ENCODE measurements at regions of chr18 and their contacts with region 1.

Region 1: GRCh38 chr18:35343936-35344735 is at the start of gene ZNF24:
- DNase-seq: peak; percentile 93 to 94
- ATAC-seq: peak; percentile 85 to 95 (median 87)
- H3K4me3 ChIP-seq: peak within 1 kb of the TSS; percentile 99
- H3K4me3 Mint-ChIP-seq: peak within 1 kb of the TSS; percentile 99
- H3K27ac ChIP-seq: peak within 1 kb of the TSS; percentile 99
- H3K27ac Mint-ChIP-seq: peak within 1 kb of the TSS; percentile 98 to 100
- H3K4me1 ChIP-seq: peaks cover 15% of the 10 kb centered on the region
- H3K4me1 Mint-ChIP-seq: peaks cover 46 to 47% of the 10 kb centered on the region in 2 donors
- H3K27me3 ChIP-seq: no peaks in the 10 kb centered on the region
- H3K27me3 Mint-ChIP-seq: peaks cover 0 to 3% of the 10 kb centered on the region in 2 donors
- CTCF ChIP-seq: no peak
- total RNA-seq, gene ZNF24: 50.4 to 63.9 (median 58.2) TPM

Region 2: GRCh38 chr18:35085450-35086380 is 258.4 kb before region 1 on chr18:
- intact Hi-C with region 1: no loop called
- DNase-seq: no peak
- ATAC-seq: peak in 1 of 3 donors; percentile 18
- H3K4me3 ChIP-seq: no peak overlapping the region
- H3K4me3 Mint-ChIP-seq: no peak overlapping the region
- H3K27ac ChIP-seq: no peak overlapping the region
- H3K27ac Mint-ChIP-seq: peak overlapping the region; percentile 44 to 79
- H3K4me1 ChIP-seq: no peaks in the 10 kb centered on the region
- H3K4me1 Mint-ChIP-seq: peaks cover 70 to 75% of the 10 kb centered on the region in 2 donors
- H3K27me3 ChIP-seq: no peaks in the 10 kb centered on the region
- H3K27me3 Mint-ChIP-seq: no peaks in the 10 kb centered on the region
- CTCF ChIP-seq: no peak

Region 3: DNA sequence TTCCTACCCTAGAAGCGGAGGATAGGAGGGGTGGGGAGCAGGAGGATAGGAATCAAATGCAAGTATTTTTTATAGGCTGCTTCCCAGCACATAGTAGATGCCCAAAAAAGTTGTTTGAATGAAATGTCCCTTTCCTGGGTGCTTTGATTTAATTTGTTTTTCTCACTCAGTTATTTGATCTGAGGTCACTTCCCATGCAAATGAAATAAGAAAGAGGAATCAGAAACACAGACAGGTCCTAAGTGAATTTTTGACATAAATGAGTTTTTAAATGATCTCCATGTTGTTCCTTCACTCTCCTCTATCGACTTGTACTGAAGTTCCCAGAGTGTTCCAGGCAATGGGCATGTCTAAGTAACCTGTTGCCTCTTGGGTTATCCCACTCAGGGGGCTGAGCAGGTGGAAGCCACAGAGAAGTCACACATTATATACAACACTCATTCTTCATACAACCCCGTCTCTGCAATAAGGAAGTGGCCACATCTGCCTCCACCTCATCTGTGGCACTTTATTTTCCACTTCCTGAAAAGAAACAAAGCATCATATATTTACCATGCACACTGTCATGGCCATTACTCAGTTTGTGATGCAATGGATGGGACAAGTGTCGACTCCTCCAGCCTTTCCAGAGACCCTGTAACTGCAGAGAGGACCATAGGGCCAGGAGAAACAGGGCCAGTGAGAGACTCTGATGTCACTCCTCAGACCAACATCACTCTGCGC is 185.2 kb before region 1 on chr18:
- intact Hi-C with region 1: loop called (anchors 10 kb)
- DNase-seq: peak; percentile 30 to 36
- ATAC-seq: peak; percentile 84 to 88 (median 85)
- H3K4me3 ChIP-seq: no peak overlapping the region
- H3K4me3 Mint-ChIP-seq: peak overlapping the region; percentile 62
- H3K27ac ChIP-seq: peak overlapping the region; percentile 86
- H3K27ac Mint-ChIP-seq: peak overlapping the region; percentile 92
- H3K4me1 ChIP-seq: peaks cover 50% of the 10 kb centered on the region
- H3K4me1 Mint-ChIP-seq: peaks cover 71 to 72% of the 10 kb centered on the region in 2 donors
- H3K27me3 ChIP-seq: no peaks in the 10 kb centered on the region
- H3K27me3 Mint-ChIP-seq: no peaks in the 10 kb centered on the region
- CTCF ChIP-seq: no peak

Region 4: GRCh38 chr18:35267161-35267651 is 76.9 kb before region 1 on chr18:
- intact Hi-C with region 1: loop called (anchors 1 kb)
- DNase-seq: peak; percentile 61 to 82
- ATAC-seq: peak; percentile 77 to 85 (median 84)
- H3K4me3 ChIP-seq: peak overlapping the region; percentile 88
- H3K4me3 Mint-ChIP-seq: peak overlapping the region; percentile 97
- H3K27ac ChIP-seq: peak overlapping the region; percentile 94
- H3K27ac Mint-ChIP-seq: peak overlapping the region; percentile 91 to 98
- H3K4me1 ChIP-seq: peaks cover 18% of the 10 kb centered on the region
- H3K4me1 Mint-ChIP-seq: peaks cover 23 to 33% of the 10 kb centered on the region in 2 donors
- H3K27me3 ChIP-seq: no peaks in the 10 kb centered on the region
- H3K27me3 Mint-ChIP-seq: no peaks in the 10 kb centered on the region
- CTCF ChIP-seq: no peak

Region 5: DNA sequence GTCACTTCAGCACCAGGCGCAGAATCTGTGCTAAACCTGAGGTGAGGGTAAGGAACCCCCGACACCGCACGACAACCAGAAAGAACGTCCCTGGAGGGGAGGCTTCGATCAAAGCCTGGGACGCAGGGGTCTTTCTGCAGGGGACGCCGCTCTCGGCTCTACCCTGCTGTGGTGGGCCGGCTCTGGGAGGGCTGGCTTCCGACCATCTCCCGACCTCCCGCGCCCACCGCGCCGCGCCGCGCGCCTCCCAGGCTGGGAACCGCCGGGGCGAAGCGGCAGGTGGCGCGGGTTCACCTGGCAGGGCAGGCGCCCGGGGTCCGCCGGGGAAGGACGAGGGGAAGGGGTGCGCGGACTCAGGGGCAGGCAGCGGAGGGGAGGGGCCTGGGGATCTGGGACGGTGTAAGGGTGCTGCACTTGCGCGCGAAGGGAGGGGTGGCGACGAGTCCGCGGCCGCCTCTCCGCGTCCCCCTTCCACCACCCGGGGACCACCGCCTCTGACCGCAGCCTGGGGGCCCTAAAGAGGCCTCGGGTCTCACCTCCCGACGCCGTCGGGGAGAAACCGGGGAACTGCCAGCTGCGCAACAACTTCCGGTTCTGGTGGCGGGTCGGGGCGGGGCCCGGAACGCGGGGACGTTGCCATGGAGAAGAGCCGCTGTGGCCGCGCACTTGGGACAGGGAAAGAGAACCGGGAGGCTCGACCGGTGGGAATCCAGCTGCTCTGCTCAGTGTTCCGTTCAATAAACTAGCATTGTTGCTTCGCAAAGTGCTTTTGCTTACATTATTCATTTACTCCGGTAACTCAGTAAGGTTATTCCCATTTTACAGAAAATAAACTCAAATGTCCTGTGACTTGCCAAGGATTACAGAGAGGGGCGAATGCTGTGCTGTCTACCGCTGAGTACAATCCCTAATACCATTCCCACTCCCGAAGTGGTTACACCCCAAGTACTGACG is 32.9 kb after region 1 on chr18 and contains the start of gene ZNF396:
- intact Hi-C with region 1: loop called (anchors 2 kb)
- DNase-seq: peak; percentile 68 to 82
- ATAC-seq: peak; percentile 80 to 84 (median 81)
- H3K4me3 ChIP-seq: peak within 1 kb of the TSS; percentile 78
- H3K4me3 Mint-ChIP-seq: peak within 1 kb of the TSS; percentile 89
- H3K27ac ChIP-seq: no peak within 1 kb of the TSS
- H3K27ac Mint-ChIP-seq: peak within 1 kb of the TSS; percentile 59 to 88
- H3K4me1 ChIP-seq: peaks cover 10% of the 10 kb centered on the region
- H3K4me1 Mint-ChIP-seq: peaks cover 5 to 13% of the 10 kb centered on the region in 2 donors
- H3K27me3 ChIP-seq: no peaks in the 10 kb centered on the region
- H3K27me3 Mint-ChIP-seq: no peaks in the 10 kb centered on the region
- CTCF ChIP-seq: no peak
- total RNA-seq, gene ZNF396: 1.2 to 1.7 (median 1.2) TPM